Ascending aorta (tissue), 2 donors: ENCODE measurements at regions of chrX and their contacts with region 1.

Region 1: DNA sequence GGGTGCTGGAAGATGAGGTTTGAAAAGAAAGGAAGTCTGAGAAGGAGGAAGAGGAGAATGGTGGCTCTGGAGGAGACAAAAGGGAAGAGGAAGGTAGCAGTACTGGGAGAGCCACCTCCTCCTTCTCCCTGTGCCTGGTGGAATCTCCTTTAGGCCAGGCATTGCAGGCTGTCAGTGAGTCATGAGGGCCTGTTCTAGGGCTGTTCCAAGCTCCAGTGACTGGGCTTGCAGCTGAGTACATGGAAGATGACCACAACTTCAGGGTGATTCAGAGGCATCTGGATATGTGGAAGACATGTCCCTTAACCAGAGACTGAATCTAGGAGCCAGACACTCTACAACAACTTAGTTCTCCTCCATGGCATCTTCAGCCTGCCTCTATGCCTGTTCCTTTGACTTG is 107.8 kb downstream of the EFNB1 start:
- DNase-seq: peak in 1 of 2 donors; percentile 67
- H3K4me3 ChIP-seq: no peak overlapping the region
- H3K27ac ChIP-seq: no peak overlapping the region
- H3K4me1 ChIP-seq: peaks cover 0 to 2% of the 10 kb centered on the region in 2 donors
- H3K27me3 ChIP-seq: peaks cover 3% of the 10 kb centered on the region
- CTCF ChIP-seq: no peak

Region 2: DNA sequence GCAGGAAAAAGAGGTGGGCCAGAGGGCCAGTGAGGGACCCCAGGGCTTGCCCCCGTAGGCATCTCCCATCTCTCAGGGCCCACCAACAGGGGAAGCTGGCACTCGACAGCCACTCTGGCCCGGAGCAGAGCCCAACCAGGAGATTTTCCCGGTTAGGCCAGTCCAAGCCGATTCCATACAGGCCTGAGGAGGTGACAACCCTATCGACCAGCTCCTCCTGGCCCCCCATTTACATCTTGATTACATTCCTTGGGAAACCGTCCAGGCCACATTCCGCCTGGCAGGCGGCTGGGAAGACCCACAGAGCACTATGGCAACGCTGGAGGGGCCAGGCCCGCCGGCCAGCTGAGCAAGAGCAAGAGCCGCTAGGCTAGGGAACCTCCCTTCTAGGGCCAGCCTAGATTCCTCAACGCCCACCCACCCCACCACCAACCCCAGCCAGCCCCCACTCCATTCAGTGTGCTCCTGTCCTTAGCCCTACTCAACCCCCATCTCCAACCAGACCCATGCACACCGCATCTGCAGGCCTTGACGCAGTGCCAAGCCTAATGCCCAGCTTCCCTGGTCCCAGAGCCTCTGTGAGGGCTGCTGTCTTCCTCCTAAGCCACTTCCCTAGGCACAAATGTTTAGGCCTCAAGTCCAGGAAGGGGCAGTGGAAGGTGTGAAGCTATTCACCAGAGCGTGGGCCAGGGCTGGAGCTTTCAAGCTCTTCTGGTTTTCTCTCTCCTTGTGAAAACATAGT is 53.4 kb after region 1 on chrX:
- intact Hi-C with region 1: loop called (anchors 5 kb)
- DNase-seq: peak in 1 of 2 donors; percentile 64
- H3K4me3 ChIP-seq: no peak overlapping the region
- H3K27ac ChIP-seq: peak overlapping the region; percentile 39 to 72
- H3K4me1 ChIP-seq: peaks cover 0 to 7% of the 10 kb centered on the region in 2 donors
- H3K27me3 ChIP-seq: no peaks in the 10 kb centered on the region
- CTCF ChIP-seq: no peak